Head of caudate nucleus (tissue), 42 donors: ENCODE measurements at regions of chr7 and their contacts with region 1.

Region 1: GRCh38 chr7:75878769-75879611 is at the start of gene RHBDD2:
- DNase-seq: peak; percentile 91 to 99 (median 96)

Region 2: DNA sequence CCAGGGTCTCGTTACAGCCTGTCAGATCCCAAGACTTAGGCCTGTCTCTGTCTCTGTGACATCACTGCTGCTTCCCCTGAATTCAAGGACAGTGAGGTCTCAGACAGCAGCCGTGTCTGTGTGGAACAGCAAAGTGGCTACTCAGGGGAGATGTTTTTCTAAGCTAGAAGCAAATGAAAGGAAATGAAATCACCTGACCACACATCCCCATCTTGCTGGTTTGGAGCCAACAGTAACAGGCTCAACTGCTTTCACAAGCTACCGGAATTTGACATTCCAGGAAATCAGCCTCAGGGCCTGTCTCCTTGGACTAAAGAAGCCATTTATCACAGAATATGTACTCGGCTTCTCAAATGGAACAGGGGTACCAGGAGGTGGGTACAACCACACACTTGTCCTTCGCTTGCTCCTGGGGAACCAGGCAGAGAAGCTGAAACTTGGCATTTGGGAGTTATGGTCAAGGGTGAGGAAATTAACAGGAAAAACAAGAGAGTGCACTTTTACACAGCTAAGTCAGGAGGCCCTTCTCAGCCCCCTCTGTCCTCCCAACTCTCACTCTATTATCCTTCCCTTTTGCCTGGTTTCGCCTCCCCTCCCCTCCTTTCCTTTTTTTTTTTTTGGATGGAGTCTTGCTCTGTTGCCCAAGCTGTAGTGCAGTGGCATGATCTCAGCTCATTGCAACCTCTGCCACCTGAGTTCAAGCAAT is 313.7 kb before region 1 on chr7:
- intact Hi-C with region 1: no loop called
- DNase-seq: peak in 2 of 42 donors; percentile 12 to 41

Region 3: GRCh38 chr7:75914730-75915585 is 36.0 kb after region 1 on chr7 and contains the start of gene POR:
- intact Hi-C with region 1: loop called (anchors 5 kb)
- DNase-seq: peak; percentile 91 to 100 (median 97)

Region 4: DNA sequence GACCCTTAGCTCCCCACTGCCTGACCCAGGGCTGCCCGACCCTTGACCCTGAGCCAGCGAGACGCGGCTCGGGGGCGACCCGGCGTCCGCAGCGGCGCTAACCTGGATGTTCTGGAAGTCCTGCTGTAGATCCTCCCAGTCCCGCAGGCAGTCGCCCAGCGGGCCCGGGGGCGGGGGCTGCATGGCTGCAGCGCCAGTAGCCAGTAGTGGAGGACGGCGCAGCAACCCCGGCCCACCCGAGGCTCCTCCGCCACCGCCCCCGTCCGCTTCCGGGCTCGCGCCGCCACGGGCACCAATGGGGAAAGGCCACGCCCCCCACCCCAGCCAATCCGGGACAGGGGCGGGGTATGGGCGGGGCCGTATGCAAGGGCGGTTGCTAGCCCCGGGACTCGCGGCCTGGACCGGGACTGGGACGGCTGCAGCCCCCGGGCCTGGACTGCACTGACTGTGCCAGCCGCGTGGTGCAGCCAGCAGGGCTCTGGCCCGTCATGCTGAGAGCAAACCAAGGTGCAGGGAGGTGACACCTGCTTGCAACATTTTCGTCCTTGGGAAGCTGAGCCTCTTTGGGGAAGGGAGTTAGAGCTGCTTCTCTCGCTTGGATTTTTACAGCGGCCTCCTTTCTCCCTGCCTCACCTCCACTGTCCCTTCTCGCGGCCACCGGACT is 115.5 kb after region 1 on chr7 and contains the start of gene TMEM120A:
- intact Hi-C with region 1: loop called (anchors 10 kb)
- DNase-seq: peak; percentile 83 to 98 (median 95)